ENCODE measurements at regions of chr7 and their contacts with region 1.

Region 1: DNA sequence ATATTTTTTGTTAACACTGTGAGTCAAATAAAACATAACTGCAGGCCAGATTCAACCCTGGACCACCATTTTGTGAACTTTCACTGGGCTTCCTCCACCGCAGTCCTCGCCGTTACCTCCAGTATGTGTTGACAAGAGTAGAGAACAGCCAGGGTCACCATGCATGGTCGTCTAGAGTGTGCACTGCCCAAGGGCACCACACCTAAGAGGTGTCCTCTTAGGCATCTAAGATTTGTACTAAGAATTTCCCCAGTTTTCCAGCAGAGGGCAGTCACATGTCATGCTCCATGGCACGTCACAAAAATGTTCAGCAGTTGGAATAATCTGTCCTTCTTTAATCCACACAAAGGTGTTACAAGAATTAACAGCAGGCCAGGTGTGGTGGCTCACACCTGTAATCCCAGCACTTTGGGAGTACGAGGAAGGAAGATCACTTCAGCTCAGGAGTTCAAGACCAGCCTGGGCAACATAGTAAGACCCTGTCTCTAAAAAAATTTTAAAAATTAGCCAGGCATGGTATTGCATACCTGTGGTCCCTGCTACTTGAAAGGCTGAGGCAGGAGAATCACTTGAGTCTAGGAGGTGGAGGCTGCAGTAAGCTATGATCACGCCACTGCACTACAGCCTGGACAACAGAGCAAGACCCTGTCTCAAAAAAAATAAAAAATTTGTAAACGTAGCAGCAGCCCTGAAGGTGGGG is 71.2 kb upstream of the FOXK1 start:
- DNase-seq: peak; percentile 71
- H3K4me3 ChIP-seq: no peak overlapping the region
- H3K27ac ChIP-seq: no peak overlapping the region
- H3K4me1 ChIP-seq: peaks cover 0 to 16% (median 10%) of the 10 kb centered on the region in 4 donors
- H3K27me3 ChIP-seq: no peaks in the 10 kb centered on the region
- CTCF ChIP-seq: peak; percentile 65 to 76 (median 72)
- EP300 ChIP-seq: no peak
- POLR2A ChIP-seq: no peak

Region 2: GRCh38 chr7:4631664-4632171 is 20.8 kb after region 1 on chr7:
- intact Hi-C with region 1: loop called (anchors 1 kb)
- DNase-seq: peak; percentile 96
- H3K4me3 ChIP-seq: peak overlapping the region; percentile 5 to 36 (median 35)
- H3K27ac ChIP-seq: peak overlapping the region; percentile 68 to 81 (median 72)
- H3K4me1 ChIP-seq: peaks cover 0 to 14% (median 8%) of the 10 kb centered on the region in 4 donors
- H3K27me3 ChIP-seq: no peaks in the 10 kb centered on the region
- CTCF ChIP-seq: peak; percentile 73 to 79 (median 76)
- EP300 ChIP-seq: no peak
- POLR2A ChIP-seq: no peak

Measured in sigmoid colon (tissue), 7 donors.